HepG2 (cell line): ENCODE measurements at regions of chr5 and their contacts with region 1.

Region 1: DNA sequence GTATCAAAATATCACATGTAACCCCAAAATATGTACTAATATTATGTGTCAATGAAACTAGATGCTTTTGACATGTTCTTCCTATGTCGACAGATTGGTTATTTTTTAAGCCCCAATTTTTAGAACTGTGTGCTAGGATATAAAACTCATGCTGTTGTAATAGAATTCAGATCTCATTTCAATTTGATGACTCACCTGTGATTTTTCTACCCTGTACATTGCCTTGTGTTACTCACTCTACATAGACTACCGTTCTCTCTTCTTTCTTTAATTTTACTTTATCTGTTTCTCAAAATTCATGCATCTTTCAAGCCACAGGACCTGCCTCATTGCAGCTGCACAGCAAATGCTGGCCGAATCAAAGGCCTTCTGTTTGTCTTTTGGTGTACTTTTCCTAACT is 284.5 kb downstream of the MAT2B start:
- DNase-seq: no peak
- ATAC-seq: no peak
- H3K4me3 ChIP-seq: no peak overlapping the region
- H3K27ac ChIP-seq: no peak overlapping the region
- H3K4me1 ChIP-seq: no peaks in the 10 kb centered on the region
- H3K27me3 ChIP-seq: no peaks in the 10 kb centered on the region
- CTCF ChIP-seq: no peak
- EP300 ChIP-seq: no peak
- POLR2A ChIP-seq: no peak
- RAD21 ChIP-seq: no peak

Region 2: GRCh38 chr5:163867324-163867723 is 77.5 kb after region 1 on chr5:
- CTCF ChIA-PET with region 1: no interaction called
- POLR2A ChIA-PET with region 1: no interaction called
- in situ Hi-C with region 1: no loop called
- intact Hi-C with region 1: loop called (anchors 10 kb)
- DNase-seq: no peak
- ATAC-seq: no peak
- H3K4me3 ChIP-seq: no peak overlapping the region
- H3K27ac ChIP-seq: no peak overlapping the region
- H3K4me1 ChIP-seq: no peaks in the 10 kb centered on the region
- H3K27me3 ChIP-seq: no peaks in the 10 kb centered on the region
- CTCF ChIP-seq: no peak
- EP300 ChIP-seq: no peak
- POLR2A ChIP-seq: no peak
- RAD21 ChIP-seq: no peak

Region 3: GRCh38 chr5:164139423-164139822 is 349.6 kb after region 1 on chr5:
- CTCF ChIA-PET with region 1: no interaction called
- POLR2A ChIA-PET with region 1: no interaction called
- in situ Hi-C with region 1: no loop called
- intact Hi-C with region 1: no loop called
- DNase-seq: no peak
- ATAC-seq: no peak
- H3K4me3 ChIP-seq: no peak overlapping the region
- H3K27ac ChIP-seq: no peak overlapping the region
- H3K4me1 ChIP-seq: no peaks in the 10 kb centered on the region
- H3K27me3 ChIP-seq: no peaks in the 10 kb centered on the region
- CTCF ChIP-seq: no peak
- EP300 ChIP-seq: no peak
- POLR2A ChIP-seq: no peak
- RAD21 ChIP-seq: no peak